IMR-90 (cell line): ENCODE measurements at regions of chr16 and their contacts with region 1.

Region 1: GRCh38 chr16:84569382-84569987 is 48.4 kb downstream of the COTL1 start:
- DNase-seq: no peak
- ATAC-seq: no peak; the same call in 1 of the 2 replicates
- H3K4me3 ChIP-seq: no peak overlapping the region
- H3K27ac ChIP-seq: no peak overlapping the region
- H3K4me1 ChIP-seq: no peaks in the 10 kb centered on the region
- H3K27me3 ChIP-seq: no peaks in the 10 kb centered on the region
- CTCF ChIP-seq: no peak
- POLR2A ChIP-seq: no peak
- RAD21 ChIP-seq: no peak

Region 2: DNA sequence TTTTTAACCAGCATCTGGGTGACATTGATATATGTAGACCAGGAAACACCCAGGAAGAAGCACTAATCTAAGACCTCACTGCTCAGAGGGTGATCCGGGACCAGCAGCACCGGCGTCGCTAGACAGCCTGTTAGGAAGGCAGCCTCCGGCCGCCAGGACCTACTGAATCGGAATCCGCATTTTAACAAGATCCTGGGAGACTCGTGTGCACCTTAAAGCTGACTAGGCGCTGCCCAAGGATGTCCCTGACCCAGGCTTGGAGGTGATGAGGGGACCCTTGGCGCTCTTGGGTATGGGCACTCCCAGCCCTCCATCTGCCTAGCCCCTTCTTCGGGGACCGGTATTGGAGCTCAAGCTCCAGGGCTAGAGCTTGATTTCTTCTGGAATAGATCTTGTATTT is 47.0 kb before region 1 on chr16:
- CTCF ChIA-PET with region 1: no interaction called
- POLR2A ChIA-PET with region 1: interaction called, 11 read pairs
- dilution Hi-C with region 1: no loop called
- in situ Hi-C with region 1: no loop called
- intact Hi-C with region 1: no loop called
- DNase-seq: no peak
- ATAC-seq: no peak
- H3K4me3 ChIP-seq: no peak overlapping the region
- H3K27ac ChIP-seq: no peak overlapping the region
- H3K4me1 ChIP-seq: peaks cover 9% of the 10 kb centered on the region
- H3K27me3 ChIP-seq: no peaks in the 10 kb centered on the region
- CTCF ChIP-seq: no peak
- POLR2A ChIP-seq: no peak
- RAD21 ChIP-seq: no peak

Region 3: GRCh38 chr16:84611041-84611440 is 41.6 kb after region 1 on chr16:
- CTCF ChIA-PET with region 1: no interaction called
- POLR2A ChIA-PET with region 1: no interaction called
- dilution Hi-C with region 1: no loop called
- in situ Hi-C with region 1: no loop called
- intact Hi-C with region 1: loop called (anchors 5 kb)
- DNase-seq: peak; percentile 61
- ATAC-seq: peak; percentile 15
- H3K4me3 ChIP-seq: no peak overlapping the region
- H3K27ac ChIP-seq: no peak overlapping the region; the same call in 1 of the 2 replicates
- H3K4me1 ChIP-seq: peaks cover 33% of the 10 kb centered on the region
- H3K27me3 ChIP-seq: no peaks in the 10 kb centered on the region
- CTCF ChIP-seq: no peak
- POLR2A ChIP-seq: no peak
- RAD21 ChIP-seq: no peak

Region 4: GRCh38 chr16:84947022-84947421 is 377.5 kb after region 1 on chr16:
- CTCF ChIA-PET with region 1: no interaction called
- POLR2A ChIA-PET with region 1: no interaction called
- dilution Hi-C with region 1: no loop called
- in situ Hi-C with region 1: no loop called
- intact Hi-C with region 1: no loop called
- DNase-seq: no peak
- ATAC-seq: no peak
- H3K4me3 ChIP-seq: no peak overlapping the region
- H3K27ac ChIP-seq: no peak overlapping the region
- H3K4me1 ChIP-seq: peaks cover 4% of the 10 kb centered on the region; the same call in 1 of the 2 replicates
- H3K27me3 ChIP-seq: no peaks in the 10 kb centered on the region
- CTCF ChIP-seq: no peak
- POLR2A ChIP-seq: no peak
- RAD21 ChIP-seq: no peak